ENCODE measurements at regions of chr1 and their contacts with region 1.

Region 1: DNA sequence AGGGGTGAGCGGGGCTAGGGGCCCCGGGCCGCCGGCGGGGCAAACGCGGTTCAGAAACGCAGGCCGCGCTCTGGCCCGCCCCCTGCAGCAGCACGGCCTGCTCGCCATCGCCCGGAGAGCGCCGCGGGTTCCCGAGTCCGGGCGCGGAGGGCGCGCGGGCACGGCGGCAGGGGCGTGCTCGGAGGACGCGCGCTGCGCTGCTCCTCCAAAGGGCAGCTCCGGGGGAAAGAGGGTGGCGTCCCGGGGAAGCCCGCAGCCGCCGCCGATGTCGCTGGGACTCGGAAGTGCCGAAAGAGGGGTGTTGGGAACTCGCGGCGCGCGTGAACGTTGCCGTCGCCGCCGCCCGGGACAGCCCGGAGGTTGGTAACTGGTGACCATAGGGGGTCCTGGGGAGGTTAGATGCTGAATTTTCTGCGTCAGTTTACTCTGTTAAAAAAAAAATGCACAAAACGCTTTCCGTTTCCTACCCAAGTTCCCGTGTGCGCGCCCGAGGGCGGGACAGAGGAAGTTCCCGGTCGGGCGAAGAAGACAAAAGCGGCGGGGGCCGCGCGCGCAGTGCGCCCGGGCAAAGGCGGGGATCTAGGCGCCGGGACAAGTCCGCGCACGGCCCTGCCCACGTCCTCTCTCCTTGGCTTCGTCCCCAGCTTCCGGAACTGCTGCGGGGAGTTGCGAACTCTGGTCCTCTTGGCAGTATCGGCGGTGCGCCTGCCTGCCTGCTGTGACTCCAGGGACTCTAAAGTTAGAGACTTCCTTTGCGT is at the start of gene HHAT:
- DNase-seq: peak; percentile 91
- H3K4me3 Mint-ChIP-seq: peak within 1 kb of the TSS; percentile 96
- H3K27ac Mint-ChIP-seq: peak within 1 kb of the TSS; percentile 96
- H3K4me1 Mint-ChIP-seq: peaks cover 34% of the 10 kb centered on the region
- H3K27me3 Mint-ChIP-seq: peaks cover 16% of the 10 kb centered on the region
- total RNA-seq, gene HHAT: 0.47 and 0.69 TPM in 2 replicates

Region 2: GRCh38 chr1:209769171-209769904 is 559.6 kb before region 1 on chr1:
- intact Hi-C with region 1: loop called (anchors 5 kb)
- DNase-seq: peak; percentile 93
- H3K4me3 Mint-ChIP-seq: no peak overlapping the region
- H3K27ac Mint-ChIP-seq: no peak overlapping the region
- H3K4me1 Mint-ChIP-seq: peaks cover 39% of the 10 kb centered on the region
- H3K27me3 Mint-ChIP-seq: no peaks in the 10 kb centered on the region

Region 3: GRCh38 chr1:210246447-210246846 is 82.5 kb before region 1 on chr1:
- intact Hi-C with region 1: loop called (anchors 1 kb)
- DNase-seq: no peak
- H3K4me3 Mint-ChIP-seq: no peak overlapping the region
- H3K27ac Mint-ChIP-seq: no peak overlapping the region
- H3K4me1 Mint-ChIP-seq: peaks cover 10% of the 10 kb centered on the region
- H3K27me3 Mint-ChIP-seq: peaks cover 75% of the 10 kb centered on the region

Region 4: DNA sequence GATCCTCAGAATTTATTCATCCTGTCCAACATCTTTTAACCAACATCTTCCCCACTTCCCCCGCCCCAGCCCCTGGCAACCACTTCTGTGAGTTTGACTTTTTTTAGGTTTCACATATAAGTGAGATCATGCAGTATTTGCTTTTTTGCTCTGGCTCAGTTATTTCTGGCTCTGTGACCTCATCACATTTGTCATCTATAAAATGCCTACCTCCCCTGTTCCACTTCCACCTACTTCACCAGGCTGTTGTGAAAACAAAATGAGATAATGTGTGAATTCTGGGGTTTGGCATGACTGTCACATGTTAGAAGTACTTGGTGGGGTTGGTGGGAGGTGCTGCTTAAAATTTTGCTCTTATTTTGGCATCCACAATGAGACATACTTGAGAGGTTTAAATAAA is 18.2 kb after region 1 on chr1:
- intact Hi-C with region 1: loop called (anchors 2 kb)
- DNase-seq: no peak
- H3K4me3 Mint-ChIP-seq: no peak overlapping the region
- H3K27ac Mint-ChIP-seq: no peak overlapping the region
- H3K4me1 Mint-ChIP-seq: peaks cover 8% of the 10 kb centered on the region
- H3K27me3 Mint-ChIP-seq: peaks cover 2% of the 10 kb centered on the region

Region 5: GRCh38 chr1:210400043-210400840 is 71.3 kb after region 1 on chr1:
- intact Hi-C with region 1: loop called (anchors 2 kb)
- DNase-seq: peak; percentile 83
- H3K4me3 Mint-ChIP-seq: peak overlapping the region; percentile 45
- H3K27ac Mint-ChIP-seq: peak overlapping the region; percentile 78
- H3K4me1 Mint-ChIP-seq: peaks cover 23% of the 10 kb centered on the region
- H3K27me3 Mint-ChIP-seq: peaks cover 15% of the 10 kb centered on the region